Pancreas (tissue), 10 donors: ENCODE measurements at regions of chr11 and their contacts with region 1.

Region 1: DNA sequence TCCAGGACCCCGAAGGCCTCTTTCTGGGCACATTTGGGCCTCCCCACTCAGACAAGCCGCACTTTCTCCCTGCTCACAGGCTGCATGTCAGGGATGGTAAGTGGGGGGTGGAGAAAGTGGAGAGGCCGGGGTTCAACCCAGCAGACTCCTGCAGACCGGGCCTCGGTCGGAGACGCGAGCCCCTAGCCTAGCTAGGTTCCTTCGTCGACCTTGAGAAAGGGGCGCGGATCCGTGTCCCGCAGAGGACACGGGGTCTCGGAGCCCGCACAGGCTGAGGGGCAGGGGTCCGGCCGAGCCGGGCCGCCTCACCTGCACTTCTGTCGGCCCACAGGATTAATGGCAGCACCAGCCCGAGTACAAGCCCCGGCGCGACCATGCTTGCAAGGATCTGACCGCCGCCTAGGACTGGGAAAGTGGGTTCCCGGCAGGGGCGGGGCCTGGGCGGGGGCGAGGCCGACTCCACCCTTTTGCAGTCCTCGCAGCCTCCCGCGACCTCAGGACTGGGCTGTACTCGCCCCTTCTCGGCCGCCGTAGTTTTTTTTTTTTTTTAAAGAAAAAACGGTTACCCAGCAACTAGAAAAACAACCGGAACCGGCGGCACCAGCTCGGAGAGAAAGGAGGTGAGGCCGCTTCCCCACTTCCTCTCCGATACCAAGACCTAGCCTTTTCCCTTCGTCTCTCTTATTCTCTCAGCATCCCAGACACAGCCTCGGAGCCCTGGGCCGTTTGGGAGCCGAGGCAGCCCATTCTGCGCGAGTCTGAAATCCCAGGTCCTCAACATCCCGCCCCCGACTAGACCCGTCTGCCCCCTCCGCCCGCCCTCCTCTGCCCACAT is at the starts of genes SIAE and SPA17:
- DNase-seq: peak; percentile 95 to 97 (median 95)
- ATAC-seq: peak; percentile 98 to 99 (median 98)
- H3K4me3 ChIP-seq: peak within 1 kb of the TSS; percentile 21 to 69 (median 60)
- H3K27ac ChIP-seq: peak within 1 kb of the TSS; percentile 41 to 69 (median 55)
- H3K4me1 ChIP-seq: peaks cover 0 to 9% (median 7%) of the 10 kb centered on the region in 3 donors
- H3K27me3 ChIP-seq: no peaks in the 10 kb centered on the region
- CTCF ChIP-seq: no peak
- total RNA-seq, gene SIAE: 9.6 to 29.8 (median 18.0) TPM
- total RNA-seq, gene SPA17: 1.2 to 2.9 (median 2.1) TPM

Region 2: GRCh38 chr11:124739479-124740276 is 66.1 kb after region 1 on chr11 and contains the start of gene NRGN:
- intact Hi-C with region 1: loop called in 1 of 3 experiments (anchors 10 kb)
- DNase-seq: peak; percentile 88 to 97 (median 92)
- ATAC-seq: peak; percentile 99 to 100 (median 100)
- H3K4me3 ChIP-seq: peak within 1 kb of the TSS; percentile 0 to 58 (median 33)
- H3K27ac ChIP-seq: no peak within 1 kb of the TSS
- H3K4me1 ChIP-seq: peaks cover 0 to 14% (median 0%) of the 10 kb centered on the region in 3 donors
- H3K27me3 ChIP-seq: peaks cover 0 to 9% (median 0%) of the 10 kb centered on the region in 4 donors
- CTCF ChIP-seq: no peak
- total RNA-seq, gene NRGN: 0.24 to 1.9 (median 1.2) TPM in 5 of 6 donors, not detected in the other

Region 3: DNA sequence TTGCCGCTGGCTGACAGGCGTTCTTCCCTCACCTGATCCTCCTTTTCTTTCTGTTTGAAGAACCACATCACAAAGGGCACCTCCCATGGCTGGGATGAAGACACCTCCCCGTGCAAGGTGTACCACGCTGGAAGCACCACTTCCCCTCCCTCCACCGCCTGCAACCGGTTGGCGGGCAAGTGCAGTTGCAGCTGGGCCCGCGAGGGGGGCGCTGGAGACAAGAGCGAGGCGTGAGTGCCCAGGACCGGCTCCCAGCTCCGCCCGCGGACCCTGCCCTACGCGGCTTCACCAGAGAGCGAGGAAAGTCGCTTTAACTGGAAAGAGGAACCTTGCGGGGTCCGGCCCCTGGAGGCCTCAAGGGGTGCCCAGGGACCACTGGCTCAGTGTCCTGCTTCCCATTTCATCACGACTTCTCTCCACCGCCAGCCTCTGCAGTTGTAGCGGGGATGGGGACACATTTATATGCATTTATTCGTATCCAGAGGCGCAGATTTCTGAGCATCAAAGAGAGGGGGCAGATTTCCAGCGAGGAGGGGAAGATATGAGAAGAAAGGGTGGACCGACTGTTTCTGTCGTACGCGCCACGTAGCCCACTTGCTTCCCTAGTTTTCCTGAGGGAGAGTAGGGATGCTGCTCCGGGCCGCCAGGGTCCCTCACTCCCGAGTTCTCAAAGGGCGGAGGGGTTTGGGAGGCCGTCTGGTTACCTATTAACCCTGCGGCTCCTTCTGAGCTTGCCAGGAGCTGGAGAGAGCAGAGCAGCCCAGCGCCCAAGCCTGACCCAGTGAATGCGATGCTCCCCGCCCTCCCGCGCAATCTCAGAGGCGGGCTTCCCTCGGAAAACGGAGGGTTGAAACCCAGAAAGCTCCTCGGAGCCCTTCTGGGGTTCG is 85.0 kb after region 1 on chr11:
- intact Hi-C with region 1: loop called in 1 of 3 experiments (anchors 10 kb)
- DNase-seq: peak; percentile 64 to 90 (median 80)
- ATAC-seq: peak; percentile 76 to 92 (median 84)
- H3K4me3 ChIP-seq: peak overlapping the region in 2 of 4 donors; percentile 10 to 36
- H3K27ac ChIP-seq: peak overlapping the region in 2 of 4 donors; percentile 9 to 27
- H3K4me1 ChIP-seq: peaks cover 6 to 12% (median 9%) of the 10 kb centered on the region in 3 donors
- H3K27me3 ChIP-seq: peaks cover 0 to 7% (median 1%) of the 10 kb centered on the region in 4 donors
- CTCF ChIP-seq: peak; percentile 59 to 68 (median 65)

Region 4: DNA sequence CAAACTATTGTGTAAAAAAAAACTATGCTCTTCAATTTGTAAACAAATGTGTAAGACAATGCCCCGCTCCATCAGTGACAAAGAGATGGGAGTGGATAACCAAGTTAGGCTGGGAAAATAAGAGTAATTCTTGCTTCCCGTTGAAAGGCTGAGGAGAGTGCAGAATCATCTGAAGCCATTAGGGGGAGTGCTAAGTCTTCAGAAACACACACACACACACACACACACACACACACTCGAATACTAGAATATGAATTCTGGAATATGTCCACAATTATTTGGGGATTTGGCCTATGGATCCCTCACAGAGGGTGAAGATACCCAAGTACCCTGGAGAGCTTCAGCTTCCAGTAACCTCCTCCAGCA is 163.9 kb after region 1 on chr11:
- intact Hi-C with region 1: loop called (anchors 10 kb)
- DNase-seq: no peak
- ATAC-seq: peak in 3 of 4 donors; percentile 53 to 74 (median 69)
- H3K4me3 ChIP-seq: no peak overlapping the region
- H3K27ac ChIP-seq: no peak overlapping the region
- H3K4me1 ChIP-seq: peaks cover 0 to 8% (median 0%) of the 10 kb centered on the region in 3 donors
- H3K27me3 ChIP-seq: peaks cover 0 to 35% (median 7%) of the 10 kb centered on the region in 4 donors
- CTCF ChIP-seq: no peak

Region 5: DNA sequence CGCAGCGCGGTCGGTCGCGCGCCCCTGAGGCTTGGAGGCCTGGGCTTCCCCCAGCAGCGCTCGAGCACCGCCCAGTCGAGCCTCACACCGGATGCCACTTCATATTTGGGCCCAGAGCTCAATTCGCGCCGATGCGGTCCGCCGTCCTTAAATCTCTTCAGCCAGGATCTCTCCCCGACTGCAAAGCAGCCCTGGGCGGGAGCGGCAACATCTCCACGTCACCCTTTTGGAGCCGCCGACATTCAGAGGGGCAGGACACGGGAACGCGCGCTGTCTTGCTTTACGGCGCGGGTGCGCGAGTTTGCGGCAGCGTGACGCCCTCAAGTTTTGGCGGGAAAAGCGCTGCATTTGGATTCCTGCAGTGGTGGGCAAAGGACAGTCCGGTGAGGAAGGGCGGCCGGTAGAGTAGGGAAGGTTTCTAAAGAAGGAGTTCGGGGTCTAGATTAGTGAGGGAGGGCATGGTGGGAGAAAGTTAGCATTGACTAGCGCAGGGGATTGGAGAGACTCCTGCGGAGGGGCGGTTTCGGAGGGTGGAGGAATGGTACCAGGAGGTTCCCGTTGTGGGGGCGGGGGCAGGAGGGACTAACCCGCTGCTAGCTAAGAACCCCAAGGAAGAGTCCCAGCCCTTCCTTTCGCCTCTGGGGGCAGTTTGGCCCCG is 952.2 kb after region 1 on chr11:
- intact Hi-C with region 1: no loop called
- DNase-seq: peak; percentile 82 to 93 (median 88)
- ATAC-seq: peak; percentile 91 to 96 (median 94)
- H3K4me3 ChIP-seq: peak overlapping the region; percentile 41 to 75 (median 67)
- H3K27ac ChIP-seq: peak overlapping the region; percentile 86 to 99 (median 98)
- H3K4me1 ChIP-seq: peaks cover 0 to 14% (median 11%) of the 10 kb centered on the region in 3 donors
- H3K27me3 ChIP-seq: no peaks in the 10 kb centered on the region
- CTCF ChIP-seq: no peak